H1 (cell line): ENCODE measurements at regions of chr19 and their contacts with region 1.

Region 1: DNA sequence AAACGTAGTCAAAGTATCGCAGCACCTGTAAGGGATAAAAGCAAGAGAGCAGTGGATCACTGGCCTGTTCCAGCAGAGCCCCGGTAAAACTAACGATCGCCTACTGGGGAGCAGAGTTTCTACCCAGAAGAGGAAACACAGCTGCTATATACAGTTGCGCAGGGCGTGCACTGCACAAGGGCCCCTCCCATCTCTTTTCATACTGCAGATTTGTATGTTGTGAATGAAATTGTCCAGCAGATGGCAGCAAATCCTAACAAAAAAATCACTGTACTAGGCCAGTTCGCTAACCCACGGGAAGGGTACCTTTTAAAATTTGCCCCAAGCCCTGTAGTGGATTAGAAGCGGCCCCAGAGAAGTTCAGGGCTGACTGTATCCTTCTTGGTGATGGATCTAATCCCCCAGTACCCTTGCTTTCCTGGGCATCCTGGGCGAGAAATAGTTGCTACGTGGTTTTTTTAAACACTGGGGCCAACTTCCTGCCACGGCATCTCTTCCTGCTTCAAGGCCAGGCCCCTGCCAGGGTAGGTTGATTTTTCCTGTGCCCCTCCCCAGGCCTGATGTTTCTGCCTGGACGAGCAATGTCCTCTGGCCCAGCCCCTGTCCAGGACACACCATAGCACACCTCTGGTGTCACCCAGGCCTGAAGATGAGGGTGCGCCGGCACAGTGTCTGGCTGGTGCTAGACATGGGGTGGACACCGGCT is 127.0 kb downstream of the IER2 start:
- DNase-seq: peak in 1 of 2 experiments; percentile 72
- H3K4me3 ChIP-seq: no peak overlapping the region
- H3K27ac ChIP-seq: no peak overlapping the region
- H3K4me1 ChIP-seq: peaks cover 0 to 4% (median 1%) of the 10 kb centered on the region in 4 experiments; a peak in 3 of 7 replicates
- H3K27me3 ChIP-seq: no peaks in the 10 kb centered on the region
- CTCF ChIP-seq: peak; percentile 3 to 77 (median 67)
- EP300 ChIP-seq: no peak
- POLR2A ChIP-seq: no peak
- RAD21 ChIP-seq: peak; percentile 83 to 87

Region 2: GRCh38 chr19:13255041-13255718 is 22.1 kb before region 1 on chr19:
- CTCF ChIA-PET with region 1: no interaction called
- POLR2A ChIA-PET with region 1: no interaction called
- DNase-seq: no peak
- H3K4me3 ChIP-seq: no peak overlapping the region
- H3K27ac ChIP-seq: no peak overlapping the region
- H3K4me1 ChIP-seq: no peaks in the 10 kb centered on the region
- H3K27me3 ChIP-seq: no peaks in the 10 kb centered on the region
- CTCF ChIP-seq: no peak
- EP300 ChIP-seq: no peak
- POLR2A ChIP-seq: no peak
- RAD21 ChIP-seq: no peak

Region 3: GRCh38 chr19:13291759-13292312 is 14.6 kb after region 1 on chr19:
- CTCF ChIA-PET with region 1: interaction called, 50 read pairs
- POLR2A ChIA-PET with region 1: no interaction called
- DNase-seq: no peak
- H3K4me3 ChIP-seq: no peak overlapping the region
- H3K27ac ChIP-seq: no peak overlapping the region
- H3K4me1 ChIP-seq: no peaks in the 10 kb centered on the region
- H3K27me3 ChIP-seq: no peaks in the 10 kb centered on the region
- CTCF ChIP-seq: no peak
- EP300 ChIP-seq: no peak
- POLR2A ChIP-seq: no peak
- RAD21 ChIP-seq: no peak

Region 4: DNA sequence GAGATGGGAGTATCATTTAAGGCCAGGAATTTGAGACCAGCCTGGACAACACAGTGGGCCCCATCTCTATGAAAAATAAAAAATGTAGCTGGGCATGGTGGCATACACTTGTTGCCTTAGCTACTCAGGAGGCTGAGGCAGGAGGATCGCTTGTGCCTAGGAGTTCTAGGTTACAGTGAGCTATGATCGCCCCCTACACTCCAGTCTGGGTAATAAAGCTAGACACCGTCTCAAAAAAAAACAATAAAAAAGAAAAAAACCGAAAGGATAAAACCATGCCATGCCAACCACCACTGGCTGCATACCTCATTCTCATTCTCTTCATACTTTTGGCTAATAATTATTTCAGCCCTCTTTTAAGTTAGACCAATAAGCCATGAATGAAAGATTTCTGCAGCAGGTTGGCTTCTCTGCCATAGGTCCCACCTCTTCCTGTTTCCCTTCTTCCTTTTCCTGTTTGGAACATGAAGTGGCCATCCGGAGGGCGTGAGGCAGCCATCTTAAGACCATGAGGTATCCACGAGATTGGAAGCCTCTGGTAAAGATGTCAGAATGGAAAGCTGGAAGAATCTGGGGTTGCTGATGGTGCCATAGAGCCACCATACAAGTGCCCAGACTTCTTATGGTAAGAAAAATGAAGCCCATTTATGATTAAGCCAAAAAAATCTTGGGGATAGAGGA is 57.7 kb after region 1 on chr19:
- CTCF ChIA-PET with region 1: interaction called, 20 read pairs
- POLR2A ChIA-PET with region 1: interaction called, 3 read pairs
- DNase-seq: no peak
- H3K4me3 ChIP-seq: no peak overlapping the region
- H3K27ac ChIP-seq: no peak overlapping the region
- H3K4me1 ChIP-seq: no peaks in the 10 kb centered on the region
- H3K27me3 ChIP-seq: no peaks in the 10 kb centered on the region
- CTCF ChIP-seq: peak in 2 of 3 experiments; percentile 22 to 24; a peak in 3 of 4 replicates
- EP300 ChIP-seq: no peak
- POLR2A ChIP-seq: no peak
- RAD21 ChIP-seq: peak; percentile 29 to 36; a peak in 3 of 4 replicates

Region 5: DNA sequence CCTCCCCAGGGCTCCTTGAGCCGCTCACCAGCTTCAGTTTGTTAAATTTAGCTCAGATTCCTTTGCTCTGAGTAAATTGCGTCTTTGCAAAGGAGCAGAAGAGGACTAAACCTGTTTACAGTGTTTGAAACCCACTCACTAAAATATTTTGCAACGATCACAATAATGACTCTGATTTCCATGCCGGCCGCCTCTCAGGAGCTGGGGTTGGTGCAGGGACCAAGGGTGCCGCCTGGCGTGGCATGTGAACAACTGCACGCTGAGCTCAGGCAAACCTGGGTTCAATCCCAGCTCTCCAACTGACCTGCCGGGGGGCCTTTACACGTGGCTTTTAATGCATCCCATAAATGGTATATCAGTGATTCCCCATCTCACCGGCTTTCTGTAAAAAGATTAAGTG is 297.7 kb after region 1 on chr19:
- CTCF ChIA-PET with region 1: interaction called, 21 read pairs
- POLR2A ChIA-PET with region 1: no interaction called
- DNase-seq: peak in 1 of 2 experiments; percentile 48
- H3K4me3 ChIP-seq: no peak overlapping the region
- H3K27ac ChIP-seq: no peak overlapping the region
- H3K4me1 ChIP-seq: no peaks in the 10 kb centered on the region
- H3K27me3 ChIP-seq: no peaks in the 10 kb centered on the region
- CTCF ChIP-seq: peak; percentile 51 to 63 (median 54)
- EP300 ChIP-seq: no peak
- POLR2A ChIP-seq: no peak
- RAD21 ChIP-seq: peak; percentile 66 to 81